ENCODE measurements at regions of chr14 and their contacts with region 1.

Region 1: DNA sequence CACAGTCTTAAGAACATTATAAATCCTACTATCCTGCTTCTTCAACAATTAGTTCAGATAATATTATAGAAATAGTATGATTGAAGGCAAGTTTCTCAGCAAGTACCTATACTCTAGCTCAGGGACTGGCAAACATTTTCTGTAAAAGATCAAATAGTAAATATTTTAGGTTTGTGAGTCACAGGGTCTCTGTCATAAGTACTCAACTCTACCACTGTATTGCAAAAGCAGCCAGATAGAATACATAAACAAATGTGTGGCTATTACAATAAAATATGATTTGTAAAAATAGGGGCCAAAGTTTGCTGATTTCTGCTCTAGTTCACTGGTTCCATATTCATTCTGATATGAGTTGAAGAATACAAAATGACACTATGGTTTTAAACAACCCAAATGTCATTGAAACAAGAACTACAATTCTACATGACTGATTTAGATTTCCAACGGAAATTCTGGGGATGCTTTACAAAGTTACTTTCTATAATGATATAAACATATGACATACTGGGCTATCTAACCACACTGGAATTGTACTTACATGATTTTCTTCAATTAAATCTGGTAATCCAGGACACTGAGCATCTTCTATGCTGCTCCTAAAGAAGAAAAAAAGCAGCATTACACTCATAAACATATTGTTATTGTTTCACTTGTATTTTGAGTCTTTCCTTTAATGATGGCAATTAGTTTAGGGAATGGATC is 23.2 kb downstream of the LGALS3 start:
- DNase-seq: no peak
- H3K4me3 ChIP-seq: no peak overlapping the region
- H3K27ac ChIP-seq: no peak overlapping the region
- H3K4me1 ChIP-seq: no peaks in the 10 kb centered on the region
- H3K27me3 ChIP-seq: no peaks in the 10 kb centered on the region
- CTCF ChIP-seq: no peak
- EP300 ChIP-seq: no peak
- POLR2A ChIP-seq: no peak
- RAD21 ChIP-seq: no peak

Region 2: GRCh38 chr14:55077691-55078151 is 74.5 kb before region 1 on chr14:
- CTCF ChIA-PET with region 1: no interaction called
- POLR2A ChIA-PET with region 1: no interaction called
- DNase-seq: peak in 1 of 2 experiments; percentile 41
- H3K4me3 ChIP-seq: no peak overlapping the region
- H3K27ac ChIP-seq: no peak overlapping the region
- H3K4me1 ChIP-seq: peaks cover 0 to 4% (median 0%) of the 10 kb centered on the region in 4 experiments; a peak in 4 of 7 replicates
- H3K27me3 ChIP-seq: no peaks in the 10 kb centered on the region
- CTCF ChIP-seq: no peak
- EP300 ChIP-seq: no peak
- POLR2A ChIP-seq: no peak
- RAD21 ChIP-seq: no peak

Region 3: GRCh38 chr14:55094321-55095157 is 57.7 kb before region 1 on chr14:
- CTCF ChIA-PET with region 1: interaction called, 12 read pairs
- POLR2A ChIA-PET with region 1: interaction called, 3 read pairs
- DNase-seq: no peak
- H3K4me3 ChIP-seq: no peak overlapping the region
- H3K27ac ChIP-seq: no peak overlapping the region
- H3K4me1 ChIP-seq: no peaks in the 10 kb centered on the region
- H3K27me3 ChIP-seq: no peaks in the 10 kb centered on the region
- CTCF ChIP-seq: no peak
- EP300 ChIP-seq: no peak
- POLR2A ChIP-seq: no peak
- RAD21 ChIP-seq: no peak

Region 4: GRCh38 chr14:55111122-55111708 is 41.0 kb before region 1 on chr14:
- CTCF ChIA-PET with region 1: no interaction called
- POLR2A ChIA-PET with region 1: no interaction called
- DNase-seq: no peak
- H3K4me3 ChIP-seq: no peak overlapping the region
- H3K27ac ChIP-seq: no peak overlapping the region
- H3K4me1 ChIP-seq: peaks cover 0 to 13% (median 8%) of the 10 kb centered on the region in 4 experiments; a peak in 5 of 7 replicates
- H3K27me3 ChIP-seq: no peaks in the 10 kb centered on the region
- CTCF ChIP-seq: peak in 1 of 3 experiments; percentile 18; a peak in 1 of 4 replicates
- EP300 ChIP-seq: no peak
- POLR2A ChIP-seq: no peak
- RAD21 ChIP-seq: no peak

Region 5: GRCh38 chr14:55123101-55123500 is 29.1 kb before region 1 on chr14:
- CTCF ChIA-PET with region 1: no interaction called
- POLR2A ChIA-PET with region 1: no interaction called
- DNase-seq: no peak
- H3K4me3 ChIP-seq: no peak overlapping the region
- H3K27ac ChIP-seq: no peak overlapping the region
- H3K4me1 ChIP-seq: no peaks in the 10 kb centered on the region
- H3K27me3 ChIP-seq: peaks cover 0 to 4% (median 2%) of the 10 kb centered on the region in 4 experiments; a peak in 5 of 7 replicates
- CTCF ChIP-seq: no peak
- EP300 ChIP-seq: no peak
- POLR2A ChIP-seq: no peak
- RAD21 ChIP-seq: no peak

Region 6: DNA sequence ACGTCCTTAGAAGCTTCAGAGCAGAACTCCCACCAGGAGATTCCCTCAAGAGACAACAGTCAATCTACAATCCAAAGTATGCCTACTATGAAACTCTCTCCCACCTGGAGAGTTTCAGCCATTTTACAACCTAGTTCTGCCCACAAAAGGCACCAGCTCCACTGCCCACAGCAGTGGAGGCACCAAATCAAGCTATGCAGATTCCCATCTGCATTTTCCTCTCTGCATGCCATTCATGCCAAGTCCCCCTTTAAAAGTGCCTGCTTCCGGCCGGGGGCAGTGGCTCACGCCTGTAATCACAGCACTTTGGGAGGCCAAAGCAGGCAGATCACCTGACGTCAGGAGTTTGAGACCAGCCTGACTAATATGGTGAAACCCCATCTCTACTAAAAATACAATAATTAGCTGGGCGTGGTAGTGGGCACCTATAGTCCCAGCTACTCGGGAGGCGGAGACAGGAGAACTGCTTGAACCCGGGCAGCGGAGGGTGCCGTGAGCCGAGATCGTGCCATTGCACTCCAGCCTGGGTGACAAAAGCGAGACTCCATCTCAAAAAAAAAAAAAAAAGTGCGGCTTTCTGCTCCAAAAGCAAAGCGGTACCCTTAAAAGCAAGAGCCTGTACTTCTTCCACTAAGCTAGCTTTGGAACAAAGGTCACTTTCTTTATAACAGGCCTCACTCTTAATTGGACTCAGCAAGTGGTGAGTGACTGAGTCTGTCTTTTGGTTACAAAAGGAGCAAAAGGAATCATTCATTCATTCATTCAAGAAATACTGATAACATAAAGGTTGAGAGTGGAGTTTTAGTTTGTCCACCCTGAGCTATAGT is 49.2 kb after region 1 on chr14:
- CTCF ChIA-PET with region 1: no interaction called
- POLR2A ChIA-PET with region 1: no interaction called
- DNase-seq: no peak
- H3K4me3 ChIP-seq: no peak overlapping the region; a peak in 1 of 8 replicates
- H3K27ac ChIP-seq: peak overlapping the region; percentile 9; the same call in 1 of the 2 replicates
- H3K4me1 ChIP-seq: peaks cover 0 to 8% (median 1%) of the 10 kb centered on the region in 4 experiments; a peak in 2 of 7 replicates
- H3K27me3 ChIP-seq: no peaks in the 10 kb centered on the region
- CTCF ChIP-seq: no peak; a peak in 1 of 4 replicates
- EP300 ChIP-seq: no peak
- POLR2A ChIP-seq: no peak
- RAD21 ChIP-seq: no peak